ENCODE measurements at regions of chr14 and their contacts with region 1.

Region 1: DNA sequence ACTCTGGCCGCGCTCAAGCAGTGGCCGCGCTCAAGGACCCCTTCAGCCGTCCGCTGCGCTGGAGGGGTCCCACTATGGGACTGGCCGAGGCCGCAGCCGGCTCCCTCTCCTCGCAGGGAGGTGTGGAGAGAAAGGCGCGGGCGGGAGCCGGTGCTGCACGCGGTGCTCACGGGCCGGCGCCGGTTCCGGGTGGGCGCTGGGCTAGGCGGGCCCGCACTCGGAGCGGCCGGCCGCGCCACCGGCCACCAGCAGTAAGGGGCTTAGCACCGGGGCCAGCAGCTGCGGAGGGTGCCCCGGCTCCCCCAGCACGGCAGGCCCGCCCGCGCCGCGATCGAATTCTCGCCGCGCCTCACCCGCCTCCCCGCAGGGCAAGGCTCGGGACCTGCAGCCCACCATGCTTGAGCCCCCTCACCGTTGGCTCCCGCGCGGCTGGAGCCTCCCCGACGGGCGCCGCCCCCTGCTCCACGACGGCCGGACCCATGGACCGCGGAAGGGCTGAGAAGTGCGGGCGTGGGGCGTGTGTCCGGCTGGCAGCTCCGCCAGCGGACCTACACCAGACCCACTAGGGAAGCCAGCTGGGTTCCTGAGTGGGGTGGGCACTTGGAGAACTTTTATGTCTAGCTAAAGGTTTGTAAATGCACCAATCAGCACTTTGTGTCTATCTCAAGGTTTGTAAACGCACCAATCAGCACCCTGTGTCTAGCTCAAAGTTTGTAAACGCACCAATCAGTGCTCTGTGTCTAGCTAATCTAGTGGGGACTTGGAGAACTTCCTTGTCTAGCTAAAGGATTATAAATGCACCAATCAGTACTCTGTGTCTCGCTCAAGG is 49.5 kb downstream of the KLHL28 start:
- DNase-seq: no peak
- ATAC-seq: no peak
- H3K4me3 ChIP-seq: no peak overlapping the region
- H3K27ac ChIP-seq: no peak overlapping the region
- H3K4me1 ChIP-seq: no peaks in the 10 kb centered on the region
- CTCF ChIP-seq: no peak
- EP300 ChIP-seq: no peak
- POLR2A ChIP-seq: no peak
- RAD21 ChIP-seq: no peak

Region 2: GRCh38 chr14:44901696-44902095 is 10.6 kb before region 1 on chr14:
- CTCF ChIA-PET with region 1: interaction called, 19 read pairs
- POLR2A ChIA-PET with region 1: interaction called, 5 read pairs
- DNase-seq: no peak
- ATAC-seq: no peak
- H3K4me3 ChIP-seq: no peak overlapping the region
- H3K27ac ChIP-seq: no peak overlapping the region
- H3K4me1 ChIP-seq: peaks cover 6% of the 10 kb centered on the region; the same call in 2 of the 3 replicates
- CTCF ChIP-seq: no peak
- EP300 ChIP-seq: no peak
- POLR2A ChIP-seq: no peak
- RAD21 ChIP-seq: no peak

Region 3: DNA sequence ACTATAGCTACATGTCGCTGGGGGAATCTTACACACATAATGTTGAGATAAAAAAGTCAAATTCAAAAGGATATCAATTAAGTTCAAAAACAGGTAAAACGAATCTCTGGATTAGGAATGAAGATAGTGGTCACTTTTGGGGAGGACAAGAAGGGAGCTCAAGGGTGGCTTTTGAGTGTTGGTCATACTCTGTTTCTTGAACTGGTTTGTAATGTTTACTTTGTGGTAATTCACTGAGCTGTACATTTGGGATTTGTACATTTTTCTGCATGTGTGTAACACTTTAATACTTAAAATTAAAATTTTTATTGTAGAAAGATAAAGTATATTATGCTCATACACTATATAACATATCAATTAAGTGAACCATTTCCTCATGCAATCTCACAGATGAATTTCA is 22.9 kb after region 1 on chr14:
- CTCF ChIA-PET with region 1: interaction called, 13 read pairs
- POLR2A ChIA-PET with region 1: no interaction called
- DNase-seq: no peak
- ATAC-seq: no peak
- H3K4me3 ChIP-seq: no peak overlapping the region
- H3K27ac ChIP-seq: no peak overlapping the region
- H3K4me1 ChIP-seq: no peaks in the 10 kb centered on the region
- CTCF ChIP-seq: no peak
- EP300 ChIP-seq: no peak
- POLR2A ChIP-seq: no peak
- RAD21 ChIP-seq: no peak

Region 4: DNA sequence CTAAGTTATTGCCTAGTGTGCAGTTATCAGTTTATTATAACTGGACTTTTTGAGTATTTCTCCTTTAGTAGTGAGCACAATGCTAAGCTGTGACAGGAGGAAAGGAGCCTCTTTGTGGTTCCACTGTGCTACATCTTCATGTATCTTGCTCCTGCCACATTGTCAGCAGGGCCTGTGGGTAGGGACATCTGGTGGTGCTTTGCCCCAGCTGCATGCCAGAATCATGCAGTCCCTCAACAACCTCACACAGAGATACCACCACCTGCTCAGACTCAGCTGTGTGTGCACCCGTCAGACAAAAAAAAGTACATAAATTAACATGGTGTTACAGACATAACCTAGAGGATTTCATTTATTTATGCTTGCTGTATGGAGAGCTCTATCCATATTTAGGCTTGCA is 289.6 kb after region 1 on chr14:
- CTCF ChIA-PET with region 1: interaction called, 14 read pairs
- POLR2A ChIA-PET with region 1: no interaction called
- DNase-seq: peak in 1 of 2 experiments; percentile 44
- ATAC-seq: peak; percentile 87 to 97
- H3K4me3 ChIP-seq: no peak overlapping the region
- H3K27ac ChIP-seq: no peak overlapping the region
- H3K4me1 ChIP-seq: no peaks in the 10 kb centered on the region
- CTCF ChIP-seq: no peak
- EP300 ChIP-seq: no peak
- POLR2A ChIP-seq: no peak
- RAD21 ChIP-seq: no peak

Region 5: GRCh38 chr14:45267071-45267470 is 354.8 kb after region 1 on chr14:
- CTCF ChIA-PET with region 1: interaction called, 101 read pairs
- POLR2A ChIA-PET with region 1: interaction called, 7 read pairs
- DNase-seq: no peak
- ATAC-seq: no peak
- H3K4me3 ChIP-seq: no peak overlapping the region
- H3K27ac ChIP-seq: no peak overlapping the region
- H3K4me1 ChIP-seq: no peaks in the 10 kb centered on the region
- CTCF ChIP-seq: no peak
- EP300 ChIP-seq: no peak
- POLR2A ChIP-seq: no peak
- RAD21 ChIP-seq: no peak

Region 6: DNA sequence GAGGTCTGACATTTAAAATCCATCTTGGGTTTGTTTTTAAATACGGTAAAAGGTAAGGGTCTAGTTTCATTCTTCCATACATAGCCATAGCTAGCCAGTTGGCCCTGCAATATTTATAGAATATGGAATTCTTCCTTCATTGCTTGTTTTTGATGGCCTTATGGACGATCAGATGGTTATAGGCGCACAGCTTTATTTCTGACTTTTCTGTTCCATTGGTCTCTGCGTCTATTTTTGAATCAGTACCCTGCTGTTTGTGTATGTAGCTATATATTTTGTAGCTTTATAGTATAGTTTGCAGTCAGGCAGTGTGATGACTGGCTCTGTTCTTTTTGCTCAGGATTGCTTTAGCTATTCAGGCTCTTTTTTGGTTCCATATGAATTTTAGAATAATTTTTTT is 707.6 kb after region 1 on chr14:
- CTCF ChIA-PET with region 1: no interaction called
- POLR2A ChIA-PET with region 1: no interaction called
- DNase-seq: no peak
- ATAC-seq: no peak
- H3K4me3 ChIP-seq: no peak overlapping the region
- H3K27ac ChIP-seq: no peak overlapping the region
- H3K4me1 ChIP-seq: no peaks in the 10 kb centered on the region
- CTCF ChIP-seq: no peak
- EP300 ChIP-seq: no peak
- POLR2A ChIP-seq: no peak
- RAD21 ChIP-seq: no peak

Measured in A549 (cell line).